OCI-LY7 (cell line): ENCODE measurements at regions of chr2 and their contacts with region 1.

Region 1: GRCh38 chr2:148534416-148535204 is 109.9 kb upstream of the EPC2 start:
- DNase-seq: no peak
- H3K4me3 ChIP-seq: no peak overlapping the region
- H3K27ac ChIP-seq: no peak overlapping the region
- H3K4me1 ChIP-seq: no peaks in the 10 kb centered on the region
- CTCF ChIP-seq: no peak

Region 2: DNA sequence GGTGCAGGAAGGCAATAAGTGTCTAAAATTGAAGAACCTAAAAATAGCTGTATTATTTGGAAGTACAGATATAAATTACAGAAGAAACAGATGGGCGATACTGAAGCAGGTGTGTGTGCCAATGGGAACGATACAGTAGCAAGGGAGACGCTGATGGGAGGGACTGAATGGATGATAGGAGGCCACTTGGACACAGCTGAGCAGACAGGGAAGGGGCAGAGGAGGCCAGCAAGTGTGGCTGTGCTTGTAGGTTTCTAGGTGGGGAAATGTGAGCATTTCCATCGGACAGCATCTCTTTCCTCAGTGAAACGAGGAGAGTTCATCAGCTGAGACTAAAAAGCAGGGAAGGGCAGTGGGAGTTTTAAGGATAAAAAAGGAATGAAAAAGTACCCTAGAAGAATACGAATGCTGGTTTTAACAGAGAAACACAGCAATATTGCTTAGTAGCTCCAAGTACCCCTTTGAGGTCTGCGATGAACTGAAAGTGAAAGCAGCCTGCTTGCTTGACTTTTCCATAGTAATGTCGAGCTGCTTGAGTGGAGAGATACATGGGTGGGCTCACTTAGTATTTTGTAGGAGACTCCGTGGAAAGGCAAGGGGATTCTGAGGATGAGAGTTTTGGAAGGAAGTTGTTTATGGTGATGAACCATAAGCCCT is 18.2 kb after region 1 on chr2:
- CTCF ChIA-PET with region 1: interaction called, 4 read pairs
- POLR2A ChIA-PET with region 1: interaction called, 11 read pairs
- intact Hi-C with region 1: no loop called
- DNase-seq: peak; percentile 39
- H3K4me3 ChIP-seq: peak overlapping the region; percentile 63
- H3K27ac ChIP-seq: no peak overlapping the region
- H3K4me1 ChIP-seq: peaks cover 8% of the 10 kb centered on the region
- CTCF ChIP-seq: no peak